ENCODE measurements at regions of chr11 and their contacts with region 1.

Region 1: GRCh38 chr11:101848262-101848661 is 66.5 kb upstream of the CEP126 start:
- DNase-seq: peak; percentile 43
- H3K4me3 Mint-ChIP-seq: no peak overlapping the region
- H3K27ac Mint-ChIP-seq: no peak overlapping the region
- H3K4me1 Mint-ChIP-seq: no peaks in the 10 kb centered on the region
- H3K27me3 Mint-ChIP-seq: no peaks in the 10 kb centered on the region
- CTCF ChIP-seq: peak; percentile 47

Region 2: GRCh38 chr11:101215069-101215468 is 633.2 kb before region 1 on chr11:
- CTCF ChIA-PET with region 1: no interaction called
- POLR2A ChIA-PET with region 1: no interaction called
- intact Hi-C with region 1: no loop called
- DNase-seq: peak; percentile 93
- H3K4me3 Mint-ChIP-seq: no peak overlapping the region
- H3K27ac Mint-ChIP-seq: no peak overlapping the region
- H3K4me1 Mint-ChIP-seq: no peaks in the 10 kb centered on the region
- H3K27me3 Mint-ChIP-seq: no peaks in the 10 kb centered on the region
- CTCF ChIP-seq: no peak

Region 3: DNA sequence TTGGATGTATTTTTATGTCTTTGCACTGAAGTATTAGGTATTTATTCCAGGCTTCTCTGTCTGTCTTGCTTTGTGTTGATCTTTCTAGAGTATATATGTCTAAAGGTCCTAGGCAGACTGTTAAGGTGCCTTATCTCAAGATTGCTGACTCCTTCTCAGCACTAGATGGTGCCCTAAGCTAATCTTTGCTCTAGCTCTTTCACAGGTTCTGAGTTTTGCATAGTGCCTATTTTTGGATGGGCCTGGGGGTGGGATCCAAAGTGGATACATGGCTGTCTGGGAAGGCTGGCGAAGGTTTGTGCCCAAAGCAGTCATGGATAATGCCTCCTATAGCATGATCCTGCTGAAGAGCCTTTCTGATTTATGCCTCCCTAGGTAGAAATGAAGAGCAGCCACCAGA is 419.3 kb before region 1 on chr11:
- CTCF ChIA-PET with region 1: interaction called, 5 read pairs
- POLR2A ChIA-PET with region 1: no interaction called
- intact Hi-C with region 1: loop called (anchors 1 kb)
- DNase-seq: peak; percentile 57
- H3K4me3 Mint-ChIP-seq: no peak overlapping the region
- H3K27ac Mint-ChIP-seq: no peak overlapping the region
- H3K4me1 Mint-ChIP-seq: peaks cover 15% of the 10 kb centered on the region
- H3K27me3 Mint-ChIP-seq: no peaks in the 10 kb centered on the region
- CTCF ChIP-seq: peak; percentile 47

Region 4: DNA sequence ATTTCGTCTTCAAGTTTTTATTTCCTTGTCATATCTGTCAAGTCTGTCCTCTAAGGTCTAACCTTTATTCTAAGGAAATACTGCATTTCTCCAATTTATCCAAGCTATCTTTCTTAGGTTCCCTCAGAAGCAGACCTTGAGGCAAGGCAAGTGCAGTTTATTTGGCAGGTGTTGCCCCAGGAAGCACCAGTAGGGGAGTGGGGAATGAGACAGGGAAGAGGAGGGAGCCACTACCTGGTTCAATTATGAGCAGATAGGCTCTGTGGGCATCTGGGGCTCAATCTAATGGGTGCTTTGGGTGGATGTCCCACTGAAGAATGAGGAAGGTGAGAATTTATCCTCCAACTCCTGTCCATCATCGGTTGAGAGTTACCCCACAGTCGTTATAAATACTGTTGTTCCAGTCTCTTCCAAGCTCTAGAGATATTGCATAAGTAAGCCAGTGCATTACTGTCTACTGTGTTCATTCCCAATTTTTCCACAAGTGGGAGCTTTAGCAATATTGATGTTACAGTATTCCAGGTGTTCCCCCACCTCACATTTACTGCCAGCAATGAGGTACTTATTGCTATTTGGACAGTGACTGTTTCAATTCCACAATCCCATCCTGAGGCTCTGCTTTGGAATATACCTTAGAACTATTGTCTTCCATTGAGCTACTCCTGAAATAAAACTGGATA is 88.4 kb before region 1 on chr11:
- CTCF ChIA-PET with region 1: interaction called, 20 read pairs
- POLR2A ChIA-PET with region 1: interaction called, 3 read pairs
- intact Hi-C with region 1: loop called (anchors 5 kb)
- DNase-seq: peak; percentile 49
- H3K4me3 Mint-ChIP-seq: no peak overlapping the region
- H3K27ac Mint-ChIP-seq: peak overlapping the region; percentile 39
- H3K4me1 Mint-ChIP-seq: peaks cover 15% of the 10 kb centered on the region
- H3K27me3 Mint-ChIP-seq: no peaks in the 10 kb centered on the region
- CTCF ChIP-seq: peak; percentile 10

Region 5: GRCh38 chr11:101835506-101836063 is 12.7 kb before region 1 on chr11:
- CTCF ChIA-PET with region 1: interaction called, 11 read pairs
- POLR2A ChIA-PET with region 1: no interaction called
- intact Hi-C with region 1: no loop called
- DNase-seq: peak; percentile 11
- H3K4me3 Mint-ChIP-seq: no peak overlapping the region
- H3K27ac Mint-ChIP-seq: no peak overlapping the region
- H3K4me1 Mint-ChIP-seq: peaks cover 6% of the 10 kb centered on the region
- H3K27me3 Mint-ChIP-seq: no peaks in the 10 kb centered on the region
- CTCF ChIP-seq: no peak

Region 6: GRCh38 chr11:101885631-101886030 is 37.4 kb after region 1 on chr11:
- CTCF ChIA-PET with region 1: no interaction called
- POLR2A ChIA-PET with region 1: no interaction called
- intact Hi-C with region 1: no loop called
- DNase-seq: no peak
- H3K4me3 Mint-ChIP-seq: no peak overlapping the region
- H3K27ac Mint-ChIP-seq: no peak overlapping the region
- H3K4me1 Mint-ChIP-seq: no peaks in the 10 kb centered on the region
- H3K27me3 Mint-ChIP-seq: no peaks in the 10 kb centered on the region
- CTCF ChIP-seq: no peak

Region 7: DNA sequence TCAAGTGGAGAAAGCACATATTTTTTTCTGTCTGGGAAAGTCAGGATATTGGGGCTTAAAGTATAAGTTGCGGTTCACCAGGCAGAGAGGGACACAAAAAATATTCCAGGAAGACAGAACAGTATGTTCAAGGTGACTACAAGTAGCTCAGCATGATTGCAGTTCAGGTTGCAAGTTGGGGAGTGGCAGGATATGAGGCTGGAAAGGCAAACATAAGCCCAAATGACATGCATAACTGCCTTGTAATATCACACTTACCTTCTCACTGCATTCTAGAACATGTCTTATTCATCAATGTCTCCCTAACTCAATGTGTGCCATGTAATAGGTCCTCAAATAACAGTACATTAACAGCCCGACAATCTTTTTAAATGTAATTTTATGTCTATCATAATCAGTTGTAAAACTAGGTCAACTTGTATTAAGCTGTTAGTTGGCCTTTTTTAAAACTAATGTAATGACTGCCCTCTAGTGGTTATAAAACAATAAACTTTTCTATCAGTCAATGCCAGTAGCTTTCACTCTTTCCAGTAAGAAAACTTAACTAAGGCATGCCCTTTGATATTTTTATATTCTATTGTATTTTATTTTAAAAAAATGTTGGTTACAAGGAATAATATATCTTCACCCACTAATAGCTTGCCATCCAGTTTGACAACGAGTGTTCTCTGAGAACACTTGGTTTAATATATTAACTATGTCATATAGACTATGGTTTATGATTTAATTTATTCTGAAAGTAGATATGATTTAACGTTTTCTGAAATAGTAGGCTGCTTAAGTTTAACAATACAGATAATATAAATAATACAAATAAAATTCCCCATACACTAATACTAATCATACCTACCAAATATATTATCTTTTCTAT is 159.5 kb after region 1 on chr11:
- CTCF ChIA-PET with region 1: interaction called, 13 read pairs
- POLR2A ChIA-PET with region 1: no interaction called
- intact Hi-C with region 1: no loop called
- DNase-seq: peak; percentile 70
- H3K4me3 Mint-ChIP-seq: no peak overlapping the region
- H3K27ac Mint-ChIP-seq: peak overlapping the region; percentile 90
- H3K4me1 Mint-ChIP-seq: peaks cover 31% of the 10 kb centered on the region
- H3K27me3 Mint-ChIP-seq: no peaks in the 10 kb centered on the region
- CTCF ChIP-seq: peak; percentile 44